GM12878 (cell line): ENCODE measurements at regions of chr3 and their contacts with region 1.

Region 1: DNA sequence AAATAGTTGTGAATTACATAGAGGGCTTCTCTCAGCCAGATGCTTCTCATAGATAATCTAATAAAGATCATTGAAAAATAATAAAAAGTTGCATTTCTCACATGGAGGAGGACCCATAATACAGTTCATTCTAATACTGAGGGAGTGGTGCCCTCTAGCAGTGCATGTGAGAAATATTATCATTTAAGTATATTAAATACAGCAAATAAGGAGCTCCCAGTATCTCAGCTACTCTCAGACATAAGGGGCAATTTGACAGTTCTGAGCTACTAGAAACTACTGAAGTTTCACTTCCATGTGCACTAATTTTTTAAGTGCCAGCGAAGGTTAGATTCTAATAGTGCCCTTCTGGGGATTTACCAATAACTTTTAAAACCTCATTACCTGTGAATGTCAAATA is 188.3 kb downstream of the IL5RA start:
- DNase-seq: peak; percentile 24
- ATAC-seq: peak; percentile 95
- H3K4me3 ChIP-seq: no peak overlapping the region
- H3K27ac ChIP-seq: no peak overlapping the region
- H3K4me1 ChIP-seq: peaks cover 5% of the 10 kb centered on the region; the same call in 1 of the 2 replicates
- H3K27me3 ChIP-seq: no peaks in the 10 kb centered on the region; a peak in 1 of 4 replicates
- CTCF ChIP-seq: peak; percentile 32 to 64 (median 45); a peak in 5 of 6 replicates
- EP300 ChIP-seq: no peak
- POLR2A ChIP-seq: no peak
- RAD21 ChIP-seq: peak; percentile 82

Region 2: DNA sequence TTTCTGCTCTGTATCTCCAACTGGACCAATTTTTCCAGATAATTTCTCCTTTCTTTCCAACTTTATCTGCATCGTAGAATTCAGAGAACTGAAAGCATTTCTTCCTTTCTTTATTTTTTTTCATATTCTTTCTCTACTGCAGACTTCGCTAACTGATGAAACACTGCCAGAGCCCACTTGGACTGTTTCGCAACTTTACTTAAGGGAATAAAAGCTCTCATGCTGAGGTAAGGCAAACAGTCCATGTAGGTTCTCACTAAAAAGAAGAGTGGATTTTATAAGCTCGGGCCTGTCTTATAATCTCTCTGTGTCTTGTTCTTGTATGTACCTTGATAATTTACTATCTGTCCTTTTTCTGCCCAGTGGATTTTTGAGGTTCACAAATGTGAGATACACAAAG is 659.7 kb before region 1 on chr3:
- CTCF ChIA-PET with region 1: interaction called, 4 read pairs
- POLR2A ChIA-PET with region 1: no interaction called
- RAD21 ChIA-PET with region 1: no interaction called
- SMC1A ChIA-PET with region 1: no interaction called
- in situ Hi-C with region 1: no loop called
- intact Hi-C with region 1: loop called (anchors 5 kb)
- DNase-seq: no peak
- ATAC-seq: no peak
- H3K4me3 ChIP-seq: no peak overlapping the region
- H3K27ac ChIP-seq: no peak overlapping the region
- H3K4me1 ChIP-seq: no peaks in the 10 kb centered on the region
- H3K27me3 ChIP-seq: no peaks in the 10 kb centered on the region
- CTCF ChIP-seq: no peak
- EP300 ChIP-seq: no peak
- POLR2A ChIP-seq: no peak
- RAD21 ChIP-seq: no peak

Region 3: DNA sequence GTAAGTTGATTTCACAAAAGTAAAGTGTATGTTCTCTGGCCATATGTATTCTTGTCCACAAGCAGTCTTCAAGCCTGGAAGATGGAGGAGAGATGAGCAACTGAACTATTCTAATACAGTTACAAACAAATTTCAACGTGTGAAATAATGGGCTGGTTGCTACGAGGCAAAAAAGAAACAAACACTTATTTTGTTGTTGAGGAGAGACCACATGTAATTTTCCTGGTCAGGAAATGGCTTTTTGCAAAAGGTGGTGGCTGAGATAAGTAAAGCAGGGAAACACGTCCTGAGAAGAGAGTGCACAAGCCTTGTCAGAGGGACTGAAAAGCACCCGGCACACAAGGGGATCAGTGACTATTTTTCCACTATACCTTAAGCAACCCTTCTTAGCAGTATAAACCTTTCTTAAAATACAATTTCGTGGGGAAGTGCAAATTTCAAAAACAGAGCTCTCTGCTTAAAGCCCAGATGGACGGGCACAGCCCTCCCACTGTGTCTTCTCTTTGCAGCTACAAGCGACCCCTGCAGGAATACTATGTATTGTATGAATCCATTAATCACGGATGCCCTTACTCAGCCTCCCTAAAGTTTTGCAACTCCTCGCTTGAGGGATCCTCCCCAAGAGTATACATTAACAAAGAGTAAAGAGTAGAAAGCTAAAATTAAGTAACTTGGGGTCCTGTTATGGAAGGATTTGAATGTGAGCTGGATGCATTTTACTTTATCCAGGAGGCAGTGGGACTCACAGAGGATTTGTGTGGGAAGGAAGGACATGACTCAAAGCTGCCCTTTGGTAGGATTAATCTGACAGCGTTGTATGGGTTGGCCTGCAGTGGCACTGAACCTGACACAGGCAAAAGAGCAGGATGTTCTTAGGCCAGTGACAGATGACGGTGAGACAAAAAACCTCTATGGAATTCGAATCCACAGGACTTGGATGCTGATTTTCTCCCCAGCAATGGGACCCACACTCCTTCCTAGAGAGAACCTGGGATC is 65.5 kb before region 1 on chr3:
- CTCF ChIA-PET with region 1: no interaction called
- POLR2A ChIA-PET with region 1: no interaction called
- RAD21 ChIA-PET with region 1: no interaction called
- SMC1A ChIA-PET with region 1: no interaction called
- in situ Hi-C with region 1: no loop called
- intact Hi-C with region 1: no loop called
- DNase-seq: no peak
- ATAC-seq: peak; percentile 45
- H3K4me3 ChIP-seq: no peak overlapping the region
- H3K27ac ChIP-seq: no peak overlapping the region
- H3K4me1 ChIP-seq: no peaks in the 10 kb centered on the region
- H3K27me3 ChIP-seq: peaks cover 0 to 2% of the 10 kb centered on the region in 2 experiments; a peak in 2 of 4 replicates
- CTCF ChIP-seq: no peak
- EP300 ChIP-seq: no peak
- POLR2A ChIP-seq: no peak
- RAD21 ChIP-seq: peak; percentile 38

Region 4: DNA sequence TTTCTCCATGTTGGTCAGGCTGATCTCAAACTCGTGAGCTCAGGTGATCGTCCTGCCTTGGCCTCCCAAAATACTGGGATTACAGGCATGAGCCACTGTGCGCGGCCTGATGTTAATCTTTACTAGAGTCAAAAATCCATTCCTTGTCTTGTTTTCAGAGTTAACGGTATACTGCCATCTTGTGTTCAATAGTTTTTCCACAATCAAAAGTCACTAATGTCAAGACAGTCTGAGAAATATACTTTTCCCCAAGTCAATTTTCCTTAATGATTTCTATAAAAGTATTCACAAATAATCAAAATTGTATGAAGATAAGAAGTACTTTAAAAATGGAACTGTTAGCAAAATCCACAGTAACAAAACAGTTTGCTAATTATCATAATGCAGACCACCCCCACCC is 249.1 kb after region 1 on chr3:
- CTCF ChIA-PET with region 1: interaction called, 4 read pairs
- POLR2A ChIA-PET with region 1: no interaction called
- RAD21 ChIA-PET with region 1: interaction called, 5 read pairs
- SMC1A ChIA-PET with region 1: no interaction called
- in situ Hi-C with region 1: no loop called
- intact Hi-C with region 1: loop called (anchors 2 kb)
- DNase-seq: no peak
- ATAC-seq: peak; percentile 55
- H3K4me3 ChIP-seq: no peak overlapping the region
- H3K27ac ChIP-seq: no peak overlapping the region
- H3K4me1 ChIP-seq: no peaks in the 10 kb centered on the region
- H3K27me3 ChIP-seq: no peaks in the 10 kb centered on the region
- CTCF ChIP-seq: peak; percentile 23 to 46 (median 42); a peak in 3 of 6 replicates
- EP300 ChIP-seq: no peak
- POLR2A ChIP-seq: no peak
- RAD21 ChIP-seq: peak; percentile 51